ENCODE measurements at regions of chr9 and their contacts with region 1.

Region 1: DNA sequence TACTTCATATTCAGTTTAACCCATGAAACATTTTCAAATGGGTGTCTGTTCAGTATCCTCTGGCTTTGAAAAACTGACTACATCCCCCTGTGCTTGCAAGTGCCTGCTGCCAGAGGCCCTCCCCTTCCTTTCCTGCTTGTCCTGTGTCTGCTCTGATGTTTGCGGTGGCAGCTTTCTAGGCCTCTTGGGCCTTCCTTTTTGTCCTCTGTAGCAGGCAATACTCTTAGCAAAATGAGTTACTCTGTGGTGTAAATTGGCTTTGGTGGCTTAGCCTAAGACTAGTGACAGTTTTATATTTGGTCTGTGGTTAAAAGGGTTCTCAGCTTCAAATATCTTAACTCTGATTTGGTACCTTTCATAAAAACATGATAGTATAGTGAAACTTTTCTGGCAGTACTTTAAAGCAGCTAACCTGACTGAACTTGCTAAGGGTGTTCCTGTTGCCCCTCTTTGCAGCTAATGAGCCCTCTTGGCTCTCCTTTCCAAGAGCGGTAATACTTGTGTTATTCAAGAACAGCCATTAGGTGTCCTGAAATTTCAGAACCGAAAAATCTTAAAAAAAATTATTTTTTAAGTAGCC is 76.6 kb downstream of the GOLM1 start:
- DNase-seq: no peak
- ATAC-seq: no peak
- H3K4me3 ChIP-seq: no peak overlapping the region
- H3K27ac ChIP-seq: no peak overlapping the region
- H3K4me1 ChIP-seq: no peaks in the 10 kb centered on the region
- H3K27me3 ChIP-seq: no peaks in the 10 kb centered on the region
- CTCF ChIP-seq: no peak
- POLR2A ChIP-seq: no peak
- RAD21 ChIP-seq: no peak

Region 2: GRCh38 chr9:85981369-85981768 is 41.4 kb before region 1 on chr9:
- CTCF ChIA-PET with region 1: no interaction called
- POLR2A ChIA-PET with region 1: no interaction called
- dilution Hi-C with region 1: no loop called
- in situ Hi-C with region 1: no loop called
- intact Hi-C with region 1: loop called (anchors 5 kb)
- DNase-seq: no peak
- ATAC-seq: no peak; the same call in 1 of the 2 replicates
- H3K4me3 ChIP-seq: no peak overlapping the region
- H3K27ac ChIP-seq: no peak overlapping the region
- H3K4me1 ChIP-seq: no peaks in the 10 kb centered on the region
- H3K27me3 ChIP-seq: no peaks in the 10 kb centered on the region
- CTCF ChIP-seq: no peak
- POLR2A ChIP-seq: no peak
- RAD21 ChIP-seq: no peak

Region 3: GRCh38 chr9:86079865-86080469 is 57.2 kb after region 1 on chr9:
- CTCF ChIA-PET with region 1: no interaction called
- POLR2A ChIA-PET with region 1: no interaction called
- dilution Hi-C with region 1: no loop called
- in situ Hi-C with region 1: no loop called
- intact Hi-C with region 1: no loop called
- DNase-seq: no peak
- ATAC-seq: peak; percentile 35; the same call in 1 of the 2 replicates
- H3K4me3 ChIP-seq: no peak overlapping the region
- H3K27ac ChIP-seq: no peak overlapping the region
- H3K4me1 ChIP-seq: peaks cover 2% of the 10 kb centered on the region
- H3K27me3 ChIP-seq: no peaks in the 10 kb centered on the region
- CTCF ChIP-seq: no peak
- POLR2A ChIP-seq: no peak
- RAD21 ChIP-seq: no peak